Natural killer cell (primary cell): ENCODE measurements at regions of chr13 and their contacts with region 1.

Region 1: DNA sequence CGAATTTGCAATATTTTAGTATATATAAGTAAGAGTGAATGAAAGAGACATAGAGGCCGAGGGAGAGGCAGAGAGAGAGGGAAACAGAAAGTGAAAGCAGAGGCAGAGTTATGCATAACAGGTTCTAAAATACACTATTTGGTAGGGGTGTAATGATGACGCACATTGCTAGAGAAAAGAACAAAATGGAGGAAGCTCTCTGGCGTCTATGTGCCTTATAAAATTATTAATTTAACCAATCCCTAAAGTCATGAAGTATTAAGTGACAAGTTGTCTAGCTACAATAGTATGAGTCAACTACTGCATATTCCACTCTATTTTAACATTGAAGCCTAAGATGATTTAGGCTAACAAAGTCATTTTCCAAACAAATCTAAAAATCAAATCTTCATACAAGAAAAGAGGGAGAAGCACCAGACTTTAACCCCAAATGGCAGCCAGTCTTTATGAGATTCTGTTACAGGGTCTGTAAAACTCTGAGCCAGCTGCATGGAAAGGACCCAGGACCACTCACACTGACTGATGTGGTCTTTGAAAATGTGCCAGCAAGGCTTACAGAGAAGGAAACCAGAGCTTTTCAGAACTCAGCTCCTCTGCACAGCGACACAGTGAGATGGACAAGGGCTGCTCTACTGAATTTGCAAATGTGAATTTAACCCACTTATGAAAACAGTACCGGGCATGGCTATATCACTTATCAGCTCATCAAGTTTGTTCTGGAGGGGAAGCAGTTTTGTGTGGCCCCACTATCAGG is 99.0 kb upstream of the SERP2 start:
- DNase-seq: peak; percentile 22 to 87
- ATAC-seq: peak; percentile 96 to 98 (median 96)
- H3K4me3 ChIP-seq: peak overlapping the region; percentile 36
- H3K4me3 Mint-ChIP-seq: peak overlapping the region; percentile 74
- H3K27ac ChIP-seq: peak overlapping the region; percentile 91
- H3K27ac Mint-ChIP-seq: peak overlapping the region; percentile 75 to 90
- H3K4me1 ChIP-seq: peaks cover 12% of the 10 kb centered on the region
- H3K4me1 Mint-ChIP-seq: peaks cover 17 to 22% of the 10 kb centered on the region in 2 donors
- H3K27me3 ChIP-seq: no peaks in the 10 kb centered on the region
- H3K27me3 Mint-ChIP-seq: peaks cover 7 to 14% of the 10 kb centered on the region in 2 donors
- CTCF ChIP-seq: no peak

Region 2: GRCh38 chr13:43767341-43767931 is 507.2 kb before region 1 on chr13:
- intact Hi-C with region 1: no loop called
- DNase-seq: no peak
- ATAC-seq: no peak
- H3K4me3 ChIP-seq: no peak overlapping the region
- H3K4me3 Mint-ChIP-seq: no peak overlapping the region
- H3K27ac ChIP-seq: no peak overlapping the region
- H3K27ac Mint-ChIP-seq: no peak overlapping the region
- H3K4me1 ChIP-seq: no peaks in the 10 kb centered on the region
- H3K4me1 Mint-ChIP-seq: no peaks in the 10 kb centered on the region
- H3K27me3 ChIP-seq: no peaks in the 10 kb centered on the region
- H3K27me3 Mint-ChIP-seq: peaks cover 7% of the 10 kb centered on the region in 2 donors
- CTCF ChIP-seq: no peak

Region 3: DNA sequence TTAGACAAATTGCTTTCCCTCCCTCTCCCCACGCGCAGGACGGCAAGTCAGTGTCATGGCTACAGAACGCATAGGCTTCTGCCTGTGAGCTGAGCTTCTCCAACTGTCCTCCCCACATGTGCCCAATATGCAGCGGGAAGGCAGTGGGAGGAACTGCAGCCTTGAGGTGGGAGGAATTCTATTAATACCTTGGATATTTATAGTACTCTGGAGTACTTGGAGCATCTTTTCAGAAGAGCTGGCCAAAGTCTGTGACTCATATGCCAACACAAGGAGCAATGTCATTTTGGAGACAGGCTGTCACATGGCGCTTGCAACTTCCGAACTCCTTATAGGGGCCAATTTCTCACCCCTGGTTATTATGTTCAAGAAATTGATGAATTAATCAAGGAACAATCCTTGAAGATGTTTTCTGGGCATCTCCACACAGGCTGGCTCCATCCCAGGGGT is 146.1 kb before region 1 on chr13:
- intact Hi-C with region 1: no loop called
- DNase-seq: no peak
- ATAC-seq: no peak
- H3K4me3 ChIP-seq: no peak overlapping the region
- H3K4me3 Mint-ChIP-seq: no peak overlapping the region
- H3K27ac ChIP-seq: no peak overlapping the region
- H3K27ac Mint-ChIP-seq: no peak overlapping the region
- H3K4me1 ChIP-seq: no peaks in the 10 kb centered on the region
- H3K4me1 Mint-ChIP-seq: no peaks in the 10 kb centered on the region
- H3K27me3 ChIP-seq: no peaks in the 10 kb centered on the region
- H3K27me3 Mint-ChIP-seq: peaks cover 10 to 22% of the 10 kb centered on the region in 2 donors
- CTCF ChIP-seq: no peak

Region 4: GRCh38 chr13:44141725-44142539 is 132.7 kb before region 1 on chr13:
- intact Hi-C with region 1: loop called (anchors 10 kb)
- DNase-seq: peak; percentile 89 to 99
- ATAC-seq: peak; percentile 97 to 100 (median 98)
- H3K4me3 ChIP-seq: peak overlapping the region; percentile 68
- H3K4me3 Mint-ChIP-seq: peak overlapping the region; percentile 91
- H3K27ac ChIP-seq: peak overlapping the region; percentile 90
- H3K27ac Mint-ChIP-seq: peak overlapping the region; percentile 85 to 91
- H3K4me1 ChIP-seq: peaks cover 13% of the 10 kb centered on the region
- H3K4me1 Mint-ChIP-seq: peaks cover 17 to 20% of the 10 kb centered on the region in 2 donors
- H3K27me3 ChIP-seq: no peaks in the 10 kb centered on the region
- H3K27me3 Mint-ChIP-seq: peaks cover 2 to 6% of the 10 kb centered on the region in 2 donors
- CTCF ChIP-seq: no peak

Region 5: DNA sequence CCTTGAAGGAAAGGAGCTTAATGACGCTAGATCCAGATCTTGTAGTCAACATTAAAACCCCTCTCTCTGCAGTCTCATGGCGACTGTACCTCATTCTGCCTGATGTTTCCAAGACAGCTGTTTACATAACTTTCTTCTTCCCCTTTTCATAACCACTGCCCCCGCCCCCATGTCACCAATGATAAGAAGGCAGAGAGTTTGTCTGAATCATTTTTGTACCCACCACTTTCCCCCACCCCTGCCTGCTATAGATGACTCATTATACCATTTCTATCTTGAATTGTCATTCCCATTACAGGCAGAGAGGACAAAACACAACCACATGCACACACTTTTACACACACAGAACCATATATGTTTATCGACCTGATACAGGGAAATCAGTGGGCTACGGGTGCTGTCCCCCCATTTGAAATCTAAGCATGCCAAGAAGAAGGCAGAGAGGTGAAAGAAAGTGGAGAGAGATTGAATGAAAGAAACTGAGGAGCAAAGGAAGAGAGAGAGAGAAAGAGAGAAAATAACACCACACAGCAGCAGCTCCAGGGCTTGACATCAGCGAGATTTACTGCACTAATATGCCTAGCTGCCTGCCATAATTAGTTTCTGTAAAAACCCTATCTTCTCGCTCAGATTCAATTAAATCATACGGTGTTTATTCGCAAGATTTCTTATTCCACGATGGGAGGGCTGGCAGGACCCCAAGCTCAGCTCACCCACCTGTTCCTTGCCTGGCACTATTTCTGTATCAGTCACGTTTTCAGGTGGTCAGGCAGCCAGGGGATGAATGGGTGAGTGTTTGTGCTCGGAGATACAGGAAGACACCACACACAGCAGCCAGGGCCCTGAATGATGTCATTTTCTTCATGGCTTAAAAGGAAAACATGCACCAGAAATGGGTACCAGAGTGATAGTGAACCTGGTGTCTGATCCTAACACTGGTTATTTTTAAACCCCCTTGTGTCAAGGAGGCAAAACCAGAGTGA is 15.3 kb before region 1 on chr13:
- intact Hi-C with region 1: loop called (anchors 2 kb)
- DNase-seq: peak; percentile 52 to 65
- ATAC-seq: peak; percentile 84 to 86 (median 85)
- H3K4me3 ChIP-seq: no peak overlapping the region
- H3K4me3 Mint-ChIP-seq: peak overlapping the region; percentile 62
- H3K27ac ChIP-seq: peak overlapping the region; percentile 60
- H3K27ac Mint-ChIP-seq: peak overlapping the region; percentile 64 to 87
- H3K4me1 ChIP-seq: peaks cover 12% of the 10 kb centered on the region
- H3K4me1 Mint-ChIP-seq: peaks cover 13 to 20% of the 10 kb centered on the region in 2 donors
- H3K27me3 ChIP-seq: no peaks in the 10 kb centered on the region
- H3K27me3 Mint-ChIP-seq: no peaks in the 10 kb centered on the region
- CTCF ChIP-seq: no peak